ENCODE measurements at regions of chr22 and their contacts with region 1.

Region 1: DNA sequence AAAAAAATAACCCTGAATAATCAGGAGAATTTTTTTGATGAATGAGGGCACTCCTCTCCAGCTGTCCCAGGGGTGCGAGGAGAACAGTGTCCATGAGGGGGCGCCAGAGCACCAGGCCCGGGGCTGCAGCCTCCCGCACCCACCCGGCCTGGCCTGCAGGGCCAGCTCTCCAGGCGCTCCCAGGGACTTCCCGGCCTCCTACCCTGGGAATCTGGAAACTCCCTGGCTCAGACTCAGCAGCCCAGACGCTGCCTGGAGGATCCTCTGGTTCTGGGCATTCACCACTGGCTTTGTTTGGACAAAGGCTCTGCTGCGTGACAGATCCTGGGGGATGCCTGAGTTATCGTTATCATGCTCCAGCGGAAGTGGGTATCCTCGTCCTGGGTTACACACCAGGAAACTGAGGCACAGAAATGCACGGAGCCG is 31.0 kb downstream of the MCM5 start:
- DNase-seq: peak; percentile 55 to 80
- ATAC-seq: peak; percentile 80 to 84
- H3K4me3 ChIP-seq: no peak overlapping the region
- H3K27ac ChIP-seq: peak overlapping the region in 3 of 4 donors; percentile 12 to 29 (median 14)
- H3K4me1 ChIP-seq: peaks cover 4 to 13% of the 10 kb centered on the region in 2 donors
- H3K27me3 ChIP-seq: no peaks in the 10 kb centered on the region
- CTCF ChIP-seq: peak; percentile 97 to 100 (median 97)
- POLR2A ChIP-seq: no peak

Region 2: GRCh38 chr22:35313311-35314121 is 117.4 kb before region 1 on chr22:
- in situ Hi-C with region 1: no loop called
- intact Hi-C with region 1: no loop called
- DNase-seq: peak; percentile 95 to 98
- ATAC-seq: peak; percentile 58 to 61
- H3K4me3 ChIP-seq: peak overlapping the region in 2 of 4 donors; percentile 28 to 31
- H3K27ac ChIP-seq: peak overlapping the region; percentile 95 to 99 (median 97)
- H3K4me1 ChIP-seq: peaks cover 92 to 93% of the 10 kb centered on the region in 2 donors
- H3K27me3 ChIP-seq: no peaks in the 10 kb centered on the region
- CTCF ChIP-seq: no peak
- POLR2A ChIP-seq: no peak

Region 3: DNA sequence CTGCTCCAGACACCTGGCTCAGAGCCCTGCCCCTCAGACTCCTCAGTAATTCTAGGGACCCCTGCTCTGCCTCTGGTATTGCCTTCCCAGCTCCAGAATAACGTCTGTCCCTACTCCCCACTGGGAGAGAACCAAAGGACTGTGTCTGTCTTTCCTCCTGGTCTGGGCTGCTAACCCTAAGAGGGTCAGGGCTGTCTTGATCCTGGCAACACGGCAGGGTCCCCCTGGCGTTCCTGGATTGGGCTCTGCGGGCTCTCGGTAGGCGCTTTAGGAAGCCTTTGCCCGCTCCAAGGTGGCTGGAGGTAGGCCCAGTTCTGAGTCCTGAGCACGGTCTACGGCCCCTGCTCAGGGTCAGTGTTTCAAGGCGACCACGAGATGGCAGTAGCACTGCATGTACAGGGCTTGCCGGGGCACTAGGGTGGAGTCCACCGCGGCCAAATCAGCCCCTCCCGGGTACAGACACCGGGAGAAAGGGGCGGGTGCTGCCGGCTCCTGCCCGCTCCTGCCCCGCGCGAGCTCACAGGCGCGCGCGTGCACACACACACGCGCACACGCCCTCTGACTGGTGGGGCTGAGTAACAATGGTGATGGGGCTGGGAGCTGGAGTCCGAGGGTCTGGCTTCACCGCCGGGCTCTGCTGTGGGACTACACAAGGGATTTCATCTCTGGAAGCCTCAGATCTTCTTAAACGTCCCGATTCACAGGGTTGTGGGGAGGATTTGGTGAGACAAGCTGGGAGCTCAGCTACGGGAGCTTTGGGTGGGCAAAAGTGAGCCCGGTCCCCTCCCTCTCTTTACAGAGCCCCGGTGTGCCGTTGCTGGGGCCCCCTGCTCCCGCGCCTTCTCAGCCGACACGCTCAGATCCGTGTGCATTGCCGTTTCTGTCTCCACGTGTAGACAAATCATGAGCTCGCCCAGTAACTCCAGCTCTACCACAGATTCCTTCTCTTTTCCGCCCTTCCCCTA is 80.1 kb before region 1 on chr22:
- in situ Hi-C with region 1: no loop called
- intact Hi-C with region 1: loop called (anchors 10 kb)
- DNase-seq: peak; percentile 94 to 95
- ATAC-seq: peak; percentile 84 to 86
- H3K4me3 ChIP-seq: peak overlapping the region; percentile 53 to 75 (median 61)
- H3K27ac ChIP-seq: peak overlapping the region; percentile 83 to 91 (median 86)
- H3K4me1 ChIP-seq: peaks cover 16 to 24% of the 10 kb centered on the region in 2 donors
- H3K27me3 ChIP-seq: no peaks in the 10 kb centered on the region
- CTCF ChIP-seq: peak; percentile 93 to 97 (median 95)
- POLR2A ChIP-seq: peak; percentile 68 to 75

Region 4: DNA sequence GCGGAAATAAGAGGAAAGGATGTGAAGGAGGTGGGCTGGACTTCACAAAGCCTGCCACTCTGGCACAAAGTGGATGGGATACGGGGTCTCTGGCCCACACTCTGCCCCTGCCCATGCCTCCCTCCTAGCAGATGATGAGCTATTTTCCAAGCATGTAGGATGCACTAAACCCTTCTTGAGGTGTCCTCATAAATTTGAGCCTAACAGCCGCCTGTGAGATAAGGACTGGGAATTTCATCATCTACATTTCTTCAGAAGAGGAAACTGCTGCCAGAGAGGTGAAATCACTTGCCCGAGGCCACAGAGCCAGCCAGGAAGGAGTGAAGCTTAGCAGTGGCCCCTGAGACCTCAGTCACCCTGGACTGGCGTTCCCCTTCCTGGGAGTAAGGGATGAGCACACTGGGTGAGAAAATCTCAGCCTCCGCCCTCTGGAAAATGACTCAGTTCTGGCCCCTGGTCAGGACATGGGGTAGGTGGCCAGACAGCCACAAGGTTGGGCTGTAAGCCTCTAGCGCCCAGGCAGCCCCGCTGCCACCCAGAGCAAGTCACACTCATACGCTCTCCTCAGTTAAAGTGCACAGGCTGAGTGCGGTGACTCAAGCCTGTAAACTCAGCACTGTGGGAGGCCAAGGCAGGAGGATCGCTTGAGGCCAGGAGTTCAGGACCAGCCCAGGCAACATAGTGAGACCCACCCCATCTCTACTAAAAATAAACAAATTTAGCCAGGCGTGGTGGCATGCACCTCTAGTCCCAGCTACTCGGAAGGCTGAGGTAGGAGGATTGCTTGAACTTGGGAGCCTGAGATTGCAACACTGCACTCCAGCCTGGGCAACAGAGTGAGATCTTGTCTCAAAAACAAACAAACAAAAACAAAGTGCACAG is 158.4 kb after region 1 on chr22:
- in situ Hi-C with region 1: loop called (anchors 5 kb)
- intact Hi-C with region 1: no loop called
- DNase-seq: peak; percentile 86 to 97
- ATAC-seq: peak; percentile 57 to 72
- H3K4me3 ChIP-seq: peak overlapping the region in 1 of 4 donors; percentile 26
- H3K27ac ChIP-seq: peak overlapping the region; percentile 90 to 99 (median 96)
- H3K4me1 ChIP-seq: peaks cover 61% of the 10 kb centered on the region in 2 donors
- H3K27me3 ChIP-seq: no peaks in the 10 kb centered on the region
- CTCF ChIP-seq: peak in 1 of 5 experiments; percentile 17
- POLR2A ChIP-seq: peak; percentile 69 to 74

Region 5: GRCh38 chr22:35627264-35628041 is 196.5 kb after region 1 on chr22:
- in situ Hi-C with region 1: loop called in 1 of 4 experiments (anchors 5 kb)
- intact Hi-C with region 1: loop called (anchors 2 kb)
- DNase-seq: peak in 1 of 2 donors; percentile 81
- ATAC-seq: peak; percentile 22 to 35
- H3K4me3 ChIP-seq: peak overlapping the region; percentile 45 to 62 (median 59)
- H3K27ac ChIP-seq: peak overlapping the region; percentile 62 to 76 (median 68)
- H3K4me1 ChIP-seq: peaks cover 12 to 24% of the 10 kb centered on the region in 2 donors
- H3K27me3 ChIP-seq: no peaks in the 10 kb centered on the region
- CTCF ChIP-seq: peak; percentile 23 to 74 (median 46)
- POLR2A ChIP-seq: no peak

Region 6: DNA sequence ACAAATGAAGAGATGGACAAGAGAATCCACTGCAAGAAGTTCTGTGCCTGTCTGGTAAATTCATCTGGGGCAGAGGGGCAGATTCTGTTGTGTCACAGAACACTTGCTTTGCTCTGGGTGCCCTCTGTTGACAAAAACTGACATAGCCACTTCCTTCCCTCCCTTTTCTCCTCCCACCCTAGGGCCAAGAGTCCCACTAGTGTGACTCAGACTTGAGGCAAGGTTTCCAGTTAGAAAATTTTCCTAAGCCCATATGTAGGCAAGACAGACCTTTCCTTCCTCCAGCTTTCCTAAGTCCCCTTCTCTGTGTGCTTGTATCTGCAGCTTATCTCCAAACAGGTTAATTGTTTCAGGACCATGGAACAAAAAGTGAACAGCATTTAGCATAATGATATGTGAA is 490.9 kb after region 1 on chr22:
- in situ Hi-C with region 1: loop called in 1 of 4 experiments (anchors 25 kb)
- intact Hi-C with region 1: loop called (anchors 10 kb)
- DNase-seq: peak; percentile 50 to 82
- ATAC-seq: peak; percentile 93 to 99
- H3K4me3 ChIP-seq: no peak overlapping the region
- H3K27ac ChIP-seq: peak overlapping the region; percentile 55 to 79 (median 62)
- H3K4me1 ChIP-seq: peaks cover 37 to 49% of the 10 kb centered on the region in 2 donors
- H3K27me3 ChIP-seq: no peaks in the 10 kb centered on the region
- CTCF ChIP-seq: peak; percentile 40 to 79 (median 66)
- POLR2A ChIP-seq: no peak

Region 7: GRCh38 chr22:36123673-36124630 is 693.0 kb after region 1 on chr22:
- in situ Hi-C with region 1: loop called in 1 of 4 experiments (anchors 25 kb)
- intact Hi-C with region 1: loop called (anchors 10 kb)
- DNase-seq: peak; percentile 85 to 91
- ATAC-seq: peak; percentile 96 to 98
- H3K4me3 ChIP-seq: peak overlapping the region; percentile 29 to 44 (median 40)
- H3K27ac ChIP-seq: peak overlapping the region; percentile 77 to 84 (median 83)
- H3K4me1 ChIP-seq: peaks cover 0 to 4% of the 10 kb centered on the region in 2 donors
- H3K27me3 ChIP-seq: no peaks in the 10 kb centered on the region
- CTCF ChIP-seq: peak; percentile 96 to 99 (median 98)
- POLR2A ChIP-seq: peak in 1 of 2 donors; percentile 24

Measured in gastrocnemius medialis (tissue), 4 donors.